ENCODE measurements at regions of chr1 and their contacts with region 1.

Region 1: DNA sequence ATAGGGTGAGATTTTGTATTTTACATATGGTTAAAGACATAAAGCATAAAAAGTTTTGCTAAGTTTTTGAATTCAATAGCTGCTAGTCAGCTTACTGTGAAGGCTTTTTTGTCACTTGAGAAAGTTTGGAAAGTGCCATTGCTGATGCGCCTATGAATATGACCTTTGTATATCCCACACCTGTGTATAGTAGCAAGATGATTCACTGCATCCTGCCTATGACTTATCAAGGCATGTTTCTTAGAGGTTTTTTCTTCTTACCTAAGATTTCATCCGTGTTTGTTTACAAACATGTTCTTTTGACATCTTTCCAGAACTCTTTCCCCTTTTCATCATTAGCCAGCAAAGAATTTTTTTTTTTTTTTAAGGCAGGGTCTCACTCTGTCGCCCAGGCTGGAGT is 51.5 kb downstream of the PRKAA2 start:
- DNase-seq: no peak
- H3K4me3 ChIP-seq: no peak overlapping the region
- H3K27ac ChIP-seq: no peak overlapping the region
- H3K4me1 ChIP-seq: no peaks in the 10 kb centered on the region
- H3K27me3 ChIP-seq: no peaks in the 10 kb centered on the region
- CTCF ChIP-seq: no peak
- POLR2A ChIP-seq: no peak

Region 2: DNA sequence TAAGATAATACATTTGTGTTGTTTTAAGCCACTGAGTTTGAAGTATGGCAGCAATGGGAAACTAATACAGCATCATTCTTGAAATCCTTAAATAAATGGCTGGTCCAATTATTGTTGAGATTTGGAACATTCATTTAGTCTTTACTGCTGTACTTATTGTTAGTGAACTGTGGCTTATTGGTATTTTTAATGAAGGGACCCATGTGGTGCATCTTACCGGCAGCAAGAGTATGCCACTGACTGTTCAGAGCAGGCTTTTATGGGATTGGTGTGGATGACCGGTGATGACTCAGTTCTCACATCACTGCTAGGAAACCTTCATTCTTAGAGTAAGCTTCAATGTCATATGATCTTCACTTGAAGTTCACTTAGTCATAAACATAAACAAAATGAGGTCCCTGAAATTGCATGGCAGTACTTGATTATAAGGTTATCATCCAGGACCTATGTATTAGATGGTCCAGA is 20.1 kb before region 1 on chr1:
- CTCF ChIA-PET with region 1: no interaction called
- POLR2A ChIA-PET with region 1: no interaction called
- dilution Hi-C with region 1: no loop called
- intact Hi-C with region 1: no loop called
- DNase-seq: peak; percentile 31
- H3K4me3 ChIP-seq: no peak overlapping the region
- H3K27ac ChIP-seq: no peak overlapping the region
- H3K4me1 ChIP-seq: no peaks in the 10 kb centered on the region
- H3K27me3 ChIP-seq: no peaks in the 10 kb centered on the region
- CTCF ChIP-seq: no peak
- POLR2A ChIP-seq: no peak

Region 3: DNA sequence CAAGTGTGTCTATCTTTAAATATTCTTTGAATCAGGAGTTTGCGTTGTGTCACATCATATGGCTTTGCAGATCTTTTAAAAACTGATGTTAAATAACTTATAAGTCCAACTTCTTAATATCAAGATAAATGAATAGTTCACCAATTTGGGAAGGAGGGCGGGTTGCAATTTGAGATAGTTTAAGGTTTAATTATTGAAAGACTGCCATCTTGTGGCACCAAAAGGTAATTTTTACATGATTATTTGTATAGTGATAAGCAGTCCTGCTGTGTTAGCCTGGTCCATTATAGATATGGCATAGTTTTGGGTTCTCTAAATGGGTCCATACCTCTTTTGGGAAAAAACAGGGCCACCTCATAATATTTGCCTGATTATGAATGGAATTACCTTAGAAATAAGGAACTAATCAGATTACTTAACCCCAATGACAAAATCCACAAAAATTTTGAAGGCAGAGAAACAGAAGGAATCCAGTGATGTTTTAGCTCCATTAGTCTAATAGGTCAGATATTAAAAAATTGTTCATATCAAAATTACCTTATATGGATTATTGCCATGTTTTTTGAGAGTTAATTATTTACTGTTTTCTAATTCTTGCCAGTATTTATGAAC is 12.7 kb after region 1 on chr1:
- CTCF ChIA-PET with region 1: interaction called, 15 read pairs
- POLR2A ChIA-PET with region 1: no interaction called
- dilution Hi-C with region 1: no loop called
- intact Hi-C with region 1: no loop called
- DNase-seq: peak; percentile 69
- H3K4me3 ChIP-seq: no peak overlapping the region
- H3K27ac ChIP-seq: no peak overlapping the region
- H3K4me1 ChIP-seq: peaks cover 2% of the 10 kb centered on the region
- H3K27me3 ChIP-seq: no peaks in the 10 kb centered on the region
- CTCF ChIP-seq: peak; percentile 32 to 42
- POLR2A ChIP-seq: no peak

Measured in endothelial cell of umbilical vein (primary cell).